IMR-90 (cell line): ENCODE measurements at regions of chr15 and their contacts with region 1.

Region 1: GRCh38 chr15:73991726-73992593 is at the start of gene STOML1:
- DNase-seq: peak; percentile 93
- ATAC-seq: peak; percentile 83
- H3K4me3 ChIP-seq: peak within 1 kb of the TSS; percentile 51
- H3K27ac ChIP-seq: peak within 1 kb of the TSS; percentile 88
- H3K4me1 ChIP-seq: peaks cover 27% of the 10 kb centered on the region
- H3K27me3 ChIP-seq: no peaks in the 10 kb centered on the region
- CTCF ChIP-seq: peak; percentile 88
- POLR2A ChIP-seq: peak; percentile 38; the same call in 1 of the 2 replicates
- RAD21 ChIP-seq: 0 out of 2 replicates have a peak, but pooled peaks have one; percentile 10
- total RNA-seq, gene STOML1: 11.8 and 12.5 TPM in 2 replicates

Region 2: GRCh38 chr15:73950831-73951561 is 41.0 kb before region 1 on chr15:
- CTCF ChIA-PET with region 1: no interaction called
- POLR2A ChIA-PET with region 1: no interaction called
- dilution Hi-C with region 1: no loop called
- in situ Hi-C with region 1: no loop called
- intact Hi-C with region 1: no loop called
- DNase-seq: peak; percentile 97
- ATAC-seq: peak; percentile 97
- H3K4me3 ChIP-seq: no peak overlapping the region
- H3K27ac ChIP-seq: peak overlapping the region; percentile 79
- H3K4me1 ChIP-seq: peaks cover 13% of the 10 kb centered on the region
- H3K27me3 ChIP-seq: no peaks in the 10 kb centered on the region
- CTCF ChIP-seq: peak; percentile 96
- POLR2A ChIP-seq: no peak
- RAD21 ChIP-seq: peak; percentile 90

Region 3: GRCh38 chr15:74025436-74025835 is 33.5 kb after region 1 on chr15:
- CTCF ChIA-PET with region 1: interaction called, 4 read pairs
- POLR2A ChIA-PET with region 1: no interaction called
- dilution Hi-C with region 1: no loop called
- in situ Hi-C with region 1: no loop called
- intact Hi-C with region 1: loop called (anchors 5 kb)
- DNase-seq: peak; percentile 61
- ATAC-seq: peak; percentile 92
- H3K4me3 ChIP-seq: no peak overlapping the region
- H3K27ac ChIP-seq: peak overlapping the region; percentile 28; the same call in 1 of the 2 replicates
- H3K4me1 ChIP-seq: peaks cover 14% of the 10 kb centered on the region
- H3K27me3 ChIP-seq: no peaks in the 10 kb centered on the region
- CTCF ChIP-seq: no peak
- POLR2A ChIP-seq: no peak
- RAD21 ChIP-seq: no peak

Region 4: DNA sequence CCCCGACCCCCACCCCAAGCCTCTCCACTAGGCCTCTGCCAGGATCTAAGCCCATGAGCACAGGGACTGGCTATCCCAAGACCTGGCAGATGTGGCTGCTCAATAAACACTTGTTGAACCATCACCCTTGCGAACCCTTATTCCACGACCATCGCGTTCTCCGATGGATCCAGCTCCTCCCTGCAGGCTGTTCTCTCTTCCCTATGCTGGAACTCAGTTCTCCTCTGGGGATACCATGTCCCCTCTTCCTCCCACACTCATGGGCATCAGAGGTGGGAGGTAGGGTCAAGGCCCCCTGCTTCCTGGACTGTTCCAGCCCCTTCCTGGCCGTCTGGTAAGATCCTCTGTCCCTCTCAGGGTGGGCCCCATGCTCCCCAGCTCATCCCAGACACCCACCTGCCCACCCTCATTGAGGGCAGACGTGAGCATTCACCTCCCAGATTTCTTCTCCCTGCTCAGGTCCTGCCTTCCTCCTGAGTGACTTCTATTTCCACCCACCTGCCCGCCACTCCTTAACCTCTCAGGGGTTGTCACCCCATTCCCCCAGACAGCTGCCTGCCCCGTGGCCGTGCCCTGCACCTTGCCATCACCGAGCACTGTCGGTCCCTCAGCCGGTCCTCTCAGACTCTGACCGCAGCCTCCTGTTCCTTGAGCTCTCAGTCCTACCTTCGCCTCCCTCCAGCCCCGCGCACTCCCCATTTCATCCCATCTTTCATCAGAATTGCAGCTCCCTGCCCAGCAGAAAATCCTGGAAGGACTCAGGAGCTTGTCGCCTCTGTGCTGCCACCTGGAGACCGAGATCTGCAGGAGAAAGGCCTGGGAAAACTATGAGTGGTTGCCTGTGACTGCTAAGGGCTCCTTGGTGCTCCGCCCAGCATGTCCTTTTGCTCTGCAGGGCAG is 44.6 kb after region 1 on chr15:
- CTCF ChIA-PET with region 1: interaction called, 3 read pairs
- POLR2A ChIA-PET with region 1: no interaction called
- dilution Hi-C with region 1: no loop called
- in situ Hi-C with region 1: loop called (anchors 5 kb)
- intact Hi-C with region 1: no loop called
- DNase-seq: peak; percentile 73
- ATAC-seq: peak; percentile 55
- H3K4me3 ChIP-seq: no peak overlapping the region
- H3K27ac ChIP-seq: no peak overlapping the region
- H3K4me1 ChIP-seq: peaks cover 30% of the 10 kb centered on the region
- H3K27me3 ChIP-seq: no peaks in the 10 kb centered on the region
- CTCF ChIP-seq: peak; percentile 69
- POLR2A ChIP-seq: no peak
- RAD21 ChIP-seq: peak; percentile 68